ENCODE measurements at regions of chrX and their contacts with region 1.

Region 1: DNA sequence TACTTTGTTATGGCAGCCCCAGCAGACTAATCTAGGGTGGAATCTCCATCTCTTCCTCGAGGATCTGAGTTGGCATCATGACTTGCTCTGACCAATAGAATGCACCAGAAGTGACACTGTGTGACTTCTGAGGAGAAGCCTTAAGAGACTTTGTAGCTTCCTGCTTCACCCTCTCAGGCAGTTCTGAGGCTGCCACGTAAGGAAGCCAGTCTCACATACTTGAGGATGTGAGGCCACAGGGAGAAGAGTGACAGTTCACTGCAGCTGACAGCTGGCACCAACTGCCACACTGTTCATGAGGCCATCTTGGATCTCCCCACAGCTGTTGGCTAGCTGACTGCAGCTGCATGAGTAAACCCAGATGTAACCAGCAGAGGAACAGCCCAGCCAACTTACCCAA is 29.3 kb upstream of the BCOR start:
- DNase-seq: peak; percentile 92
- H3K4me3 ChIP-seq: no peak overlapping the region
- H3K27ac ChIP-seq: peak overlapping the region; percentile 97
- H3K4me1 ChIP-seq: peaks cover 29% of the 10 kb centered on the region
- CTCF ChIP-seq: no peak

Region 2: GRCh38 chrX:39605178-39605577 is 521.9 kb before region 1 on chrX:
- CTCF ChIA-PET with region 1: no interaction called
- POLR2A ChIA-PET with region 1: no interaction called
- intact Hi-C with region 1: no loop called
- DNase-seq: no peak
- H3K4me3 ChIP-seq: no peak overlapping the region
- H3K27ac ChIP-seq: no peak overlapping the region
- H3K4me1 ChIP-seq: no peaks in the 10 kb centered on the region
- CTCF ChIP-seq: no peak

Region 3: DNA sequence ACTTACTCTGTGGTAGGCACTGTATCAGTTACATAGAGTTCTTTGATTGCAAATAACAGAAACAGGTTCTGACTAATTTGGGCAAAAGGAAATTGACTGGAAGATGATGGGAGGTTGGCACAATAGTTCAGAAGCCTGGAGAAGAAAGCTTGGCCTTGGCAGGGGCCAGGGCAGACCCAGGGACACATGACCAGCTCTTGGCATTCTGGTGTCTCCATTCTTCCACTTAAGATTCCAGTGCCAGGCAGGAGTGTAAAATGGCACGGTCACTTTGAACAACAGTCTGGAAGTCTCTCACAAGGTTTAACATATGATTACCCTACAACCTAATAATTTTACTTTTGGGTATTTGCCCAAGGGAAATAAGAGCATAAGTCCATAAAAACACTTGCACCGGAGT is 205.2 kb before region 1 on chrX:
- CTCF ChIA-PET with region 1: no interaction called
- POLR2A ChIA-PET with region 1: no interaction called
- intact Hi-C with region 1: no loop called
- DNase-seq: no peak
- H3K4me3 ChIP-seq: no peak overlapping the region
- H3K27ac ChIP-seq: no peak overlapping the region
- H3K4me1 ChIP-seq: peaks cover 9% of the 10 kb centered on the region
- CTCF ChIP-seq: no peak

Region 4: GRCh38 chrX:40153335-40154249 is 26.5 kb after region 1 on chrX:
- CTCF ChIA-PET with region 1: no interaction called
- POLR2A ChIA-PET with region 1: interaction called, 4 read pairs
- intact Hi-C with region 1: loop called (anchors 1 kb)
- DNase-seq: peak; percentile 79
- H3K4me3 ChIP-seq: peak overlapping the region; percentile 67
- H3K27ac ChIP-seq: peak overlapping the region; percentile 94
- H3K4me1 ChIP-seq: peaks cover 73% of the 10 kb centered on the region
- CTCF ChIP-seq: peak; percentile 38; the same call in 1 of the 2 replicates

Measured in OCI-LY7 (cell line).